ENCODE measurements at regions of chr7 and their contacts with region 1.

Region 1: DNA sequence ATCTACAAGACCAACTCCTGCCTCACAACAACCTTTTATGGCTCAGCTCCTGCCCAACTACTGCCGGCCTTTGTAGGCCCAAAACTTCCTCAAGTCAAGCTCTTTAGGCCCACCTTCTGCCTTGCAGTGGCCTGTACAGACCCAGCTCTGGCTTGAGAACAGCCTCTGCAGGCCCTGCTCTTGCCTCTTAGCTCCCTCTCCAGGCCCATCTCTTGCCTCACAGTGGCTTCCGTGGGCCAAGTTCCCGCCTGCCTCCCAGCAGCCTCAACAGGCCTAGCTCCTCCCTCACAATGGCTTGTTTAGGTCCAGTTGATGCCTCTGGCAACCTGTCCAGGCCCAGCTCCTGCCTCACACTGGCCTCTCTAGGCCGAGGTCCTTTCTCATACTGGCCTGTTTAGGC is 32.4 kb upstream of the VKORC1L1 start:
- DNase-seq: no peak
- H3K4me3 ChIP-seq: no peak overlapping the region
- H3K27ac ChIP-seq: no peak overlapping the region
- H3K4me1 ChIP-seq: no peaks in the 10 kb centered on the region
- H3K27me3 ChIP-seq: no peaks in the 10 kb centered on the region
- CTCF ChIP-seq: no peak
- POLR2A ChIP-seq: no peak

Region 2: GRCh38 chr7:65438598-65438997 is 401.8 kb before region 1 on chr7:
- intact Hi-C with region 1: loop called (anchors 10 kb)
- DNase-seq: no peak
- H3K4me3 ChIP-seq: no peak overlapping the region
- H3K27ac ChIP-seq: no peak overlapping the region
- H3K4me1 ChIP-seq: no peaks in the 10 kb centered on the region
- H3K27me3 ChIP-seq: no peaks in the 10 kb centered on the region
- CTCF ChIP-seq: no peak
- POLR2A ChIP-seq: no peak

Measured in breast epithelium (tissue), 4 donors.